ENCODE measurements at regions of chr13 and their contacts with region 1.

Region 1: DNA sequence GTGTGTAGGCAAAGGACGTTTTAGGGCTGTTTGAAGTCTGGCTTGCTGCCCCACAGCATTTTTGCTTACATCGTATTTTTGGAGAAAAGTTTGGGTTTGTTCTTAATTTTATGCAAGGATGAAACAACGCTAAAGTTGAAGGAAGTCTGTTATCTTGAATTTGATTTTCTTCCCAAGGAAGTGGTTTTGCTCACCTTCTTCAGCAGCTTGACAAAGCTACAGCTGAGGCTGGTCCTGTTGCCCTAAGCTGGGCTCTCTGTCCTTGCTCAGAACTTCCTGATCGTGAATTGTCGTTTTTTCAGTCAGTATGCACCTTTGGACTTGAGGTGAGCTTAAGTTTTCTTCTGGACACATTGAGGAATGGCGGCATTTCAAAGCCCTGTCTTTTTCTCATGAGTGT is 62.1 kb upstream of the GSX1 start:
- DNase-seq: no peak
- ATAC-seq: no peak
- H3K4me3 ChIP-seq: no peak overlapping the region
- H3K27ac ChIP-seq: no peak overlapping the region
- H3K4me1 ChIP-seq: no peaks in the 10 kb centered on the region
- CTCF ChIP-seq: no peak
- EP300 ChIP-seq: no peak
- POLR2A ChIP-seq: no peak
- RAD21 ChIP-seq: no peak

Region 2: DNA sequence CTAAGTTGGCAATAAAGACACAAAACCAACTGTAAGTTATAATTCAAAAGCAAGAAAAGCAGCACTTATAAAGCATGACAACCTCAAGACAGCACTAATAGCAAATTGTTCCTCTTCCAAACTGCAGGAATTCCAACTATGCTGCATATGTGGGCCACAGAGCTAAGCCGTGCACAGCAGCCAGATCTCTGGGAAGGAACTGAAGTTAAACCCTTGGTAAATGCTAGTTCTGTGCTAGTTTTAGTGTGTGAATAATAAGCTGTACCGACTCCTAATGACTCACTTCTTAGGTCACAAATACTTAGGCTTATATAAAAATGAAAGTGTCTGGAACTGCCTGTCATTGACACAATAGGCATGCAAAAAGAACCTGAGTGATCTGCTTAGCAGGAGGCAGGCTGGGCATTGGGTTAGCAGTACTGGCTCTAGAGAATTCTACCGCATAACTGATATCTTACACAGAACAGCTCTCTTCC is 326.9 kb before region 1 on chr13:
- CTCF ChIA-PET with region 1: no interaction called
- POLR2A ChIA-PET with region 1: no interaction called
- DNase-seq: no peak
- ATAC-seq: no peak
- H3K4me3 ChIP-seq: no peak overlapping the region
- H3K27ac ChIP-seq: no peak overlapping the region
- H3K4me1 ChIP-seq: no peaks in the 10 kb centered on the region
- CTCF ChIP-seq: no peak
- EP300 ChIP-seq: no peak
- POLR2A ChIP-seq: no peak
- RAD21 ChIP-seq: no peak

Region 3: DNA sequence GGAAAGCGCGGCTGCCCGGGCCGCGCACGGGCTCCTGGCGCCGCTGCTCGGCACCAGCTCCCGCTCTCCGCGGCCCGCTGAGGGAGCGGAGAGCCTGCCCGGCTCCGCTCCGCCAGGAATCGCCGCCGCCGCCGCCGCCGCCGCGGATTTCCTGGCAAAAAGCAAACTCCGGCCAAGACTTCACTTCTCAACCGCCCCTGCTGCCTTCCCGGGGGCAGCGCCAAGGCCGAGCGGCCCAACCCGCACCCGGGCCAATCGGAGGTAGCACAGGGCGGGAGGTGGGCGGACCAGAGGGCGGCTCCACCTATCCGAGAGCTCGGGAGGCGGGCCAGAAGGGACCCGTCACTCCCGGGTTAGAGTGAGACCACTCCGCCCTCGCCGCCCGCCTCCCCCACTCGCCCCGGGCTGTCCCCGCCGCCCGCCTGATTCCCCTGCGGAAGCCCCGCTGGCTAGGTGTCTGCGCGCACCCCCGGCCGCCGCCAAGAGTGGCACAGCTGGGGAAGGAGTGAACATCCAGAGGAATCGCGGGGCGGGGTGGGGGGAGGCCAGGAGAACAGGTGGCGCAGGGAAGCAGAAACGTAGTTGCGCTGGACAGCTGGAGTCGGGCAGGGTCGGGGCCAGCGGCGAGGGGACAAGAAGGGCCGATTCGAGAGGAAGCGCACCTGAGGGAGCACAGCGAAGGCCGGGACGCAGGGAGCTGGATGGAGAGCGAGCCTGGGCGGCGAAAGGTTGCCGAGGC is 109.6 kb before region 1 on chr13 and contains the start of gene LNX2:
- CTCF ChIA-PET with region 1: no interaction called
- POLR2A ChIA-PET with region 1: no interaction called
- DNase-seq: peak; percentile 80 to 92
- ATAC-seq: peak; percentile 91 to 97
- H3K4me3 ChIP-seq: peak within 1 kb of the TSS; percentile 83
- H3K27ac ChIP-seq: peak within 1 kb of the TSS; percentile 84 to 97
- H3K4me1 ChIP-seq: peaks cover 20% of the 10 kb centered on the region
- CTCF ChIP-seq: no peak
- EP300 ChIP-seq: no peak
- POLR2A ChIP-seq: no peak; the same call in 1 of the 2 replicates
- RAD21 ChIP-seq: no peak
- polyA plus RNA-seq, gene LNX2: 6.3 and 6.8 TPM in 2 replicates

Region 4: DNA sequence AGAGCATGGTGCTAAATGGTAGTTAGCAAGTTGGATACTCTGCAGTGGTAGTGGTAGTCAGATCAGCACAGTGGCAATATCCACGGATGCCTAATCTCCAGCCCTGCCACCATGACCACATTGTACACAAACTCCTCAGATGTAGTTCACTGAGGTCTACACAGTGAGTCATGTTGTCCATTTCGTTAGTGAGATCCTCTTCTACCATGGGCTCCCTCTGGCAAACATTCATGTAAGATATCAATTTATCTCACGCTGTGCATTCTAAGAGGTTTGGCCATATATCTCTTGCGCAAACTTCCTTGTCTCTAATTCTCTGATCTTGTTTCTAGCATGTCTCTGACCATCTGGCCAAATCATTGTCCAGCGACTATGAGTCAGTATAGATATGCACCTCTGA is 50.3 kb before region 1 on chr13:
- CTCF ChIA-PET with region 1: no interaction called
- POLR2A ChIA-PET with region 1: interaction called, 11 read pairs
- DNase-seq: no peak
- ATAC-seq: no peak
- H3K4me3 ChIP-seq: no peak overlapping the region
- H3K27ac ChIP-seq: no peak overlapping the region
- H3K4me1 ChIP-seq: no peaks in the 10 kb centered on the region
- CTCF ChIP-seq: no peak
- EP300 ChIP-seq: no peak
- POLR2A ChIP-seq: no peak
- RAD21 ChIP-seq: no peak

Measured in A549 (cell line).